ENCODE measurements at regions of chr19 and their contacts with region 1.

Region 1: DNA sequence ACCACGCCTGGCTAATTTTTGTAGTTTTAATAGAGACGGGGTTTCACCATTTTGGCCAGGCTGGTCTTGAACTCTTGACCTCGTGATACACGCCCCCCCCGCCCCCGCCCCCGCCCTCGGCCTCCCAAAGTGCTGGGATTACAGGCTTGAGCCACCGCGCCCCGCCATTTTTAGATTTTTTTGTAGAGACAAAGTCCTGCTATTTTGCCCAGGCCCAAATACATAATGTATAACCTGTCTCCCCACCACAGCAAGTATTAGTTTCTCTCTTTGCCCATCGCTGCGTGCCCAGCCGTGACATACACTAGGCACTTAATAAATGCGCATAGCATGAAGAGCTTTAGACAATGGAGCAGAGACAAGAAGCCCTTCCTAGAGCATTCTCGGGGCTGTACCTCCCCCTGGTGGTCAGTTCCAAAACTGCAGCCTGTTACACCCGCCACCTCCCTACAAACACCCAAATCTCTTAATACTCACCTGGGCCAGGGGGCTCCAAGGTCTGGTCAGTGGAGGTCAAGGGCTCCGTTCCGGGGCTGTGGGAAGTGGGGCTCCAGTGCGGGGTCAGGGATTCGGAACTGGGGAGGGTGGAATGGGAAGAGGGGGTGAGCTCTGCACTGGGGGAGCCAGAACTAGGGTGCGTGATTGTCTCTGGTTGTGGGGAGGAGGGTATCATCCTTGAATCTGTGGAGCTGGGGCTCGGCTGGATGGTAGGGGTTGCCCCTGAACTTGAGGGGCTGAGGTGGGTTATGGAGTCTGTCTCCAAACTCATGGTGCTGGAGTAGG is 22.5 kb downstream of the IQCN start:
- DNase-seq: peak; percentile 65 to 87 (median 77)
- ATAC-seq: peak; percentile 90
- H3K4me3 ChIP-seq: no peak overlapping the region
- H3K4me3 Mint-ChIP-seq: no peak overlapping the region
- H3K27ac ChIP-seq: no peak overlapping the region
- H3K27ac Mint-ChIP-seq: peak overlapping the region in 2 of 9 donors; percentile 2 to 62
- H3K4me1 ChIP-seq: no peaks in the 10 kb centered on the region
- H3K4me1 Mint-ChIP-seq: peaks cover 0 to 7% (median 5%) of the 10 kb centered on the region in 7 donors
- H3K27me3 ChIP-seq: no peaks in the 10 kb centered on the region
- H3K27me3 Mint-ChIP-seq: peaks cover 22 to 36% (median 34%) of the 10 kb centered on the region in 5 donors

Region 2: DNA sequence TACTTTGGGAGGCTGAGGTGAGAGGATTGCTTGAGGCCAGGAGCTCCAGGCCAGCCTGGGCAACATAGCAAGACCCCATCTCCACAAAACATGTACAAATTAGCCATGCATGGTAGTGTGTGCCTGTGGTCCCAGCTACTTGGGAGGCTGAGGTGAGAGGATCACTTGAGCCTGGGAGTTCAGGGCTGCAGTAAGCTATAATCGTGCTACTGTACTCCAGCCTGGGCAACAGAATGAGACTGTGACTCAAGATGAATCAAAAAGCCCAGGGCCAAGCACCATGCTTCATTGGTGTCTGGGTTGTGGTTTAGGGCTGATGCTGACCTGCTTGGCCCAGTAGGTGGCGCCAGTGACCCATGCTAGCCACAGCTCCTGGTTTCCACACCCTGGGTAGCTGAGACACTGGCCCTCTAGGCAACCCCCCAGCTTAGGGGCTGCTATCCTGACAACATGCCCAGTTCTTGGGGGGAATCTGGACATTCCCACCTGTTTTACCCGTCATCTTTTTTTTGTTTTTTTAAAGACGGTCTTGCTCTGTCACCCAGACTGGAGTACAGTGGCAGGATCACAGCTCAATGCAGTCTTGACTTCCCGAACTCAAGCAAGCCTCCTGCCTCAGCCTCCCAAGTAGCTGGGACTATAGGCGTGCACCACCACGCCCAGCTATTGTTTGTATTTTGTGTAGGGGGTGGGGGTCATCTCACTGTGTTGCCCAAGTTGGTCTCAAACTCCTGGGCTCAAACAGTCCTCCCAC is 313.5 kb before region 1 on chr19:
- CTCF ChIA-PET with region 1: interaction called, 6 read pairs
- POLR2A ChIA-PET with region 1: no interaction called
- intact Hi-C with region 1: loop called in 1 of 2 experiments (anchors 1 kb)
- DNase-seq: peak; percentile 67 to 85 (median 78)
- ATAC-seq: peak; percentile 98
- H3K4me3 ChIP-seq: no peak overlapping the region
- H3K4me3 Mint-ChIP-seq: no peak overlapping the region
- H3K27ac ChIP-seq: no peak overlapping the region
- H3K27ac Mint-ChIP-seq: no peak overlapping the region
- H3K4me1 ChIP-seq: peaks cover 5 to 8% of the 10 kb centered on the region in 2 donors
- H3K4me1 Mint-ChIP-seq: peaks cover 5 to 7% (median 6%) of the 10 kb centered on the region in 7 donors
- H3K27me3 ChIP-seq: no peaks in the 10 kb centered on the region
- H3K27me3 Mint-ChIP-seq: no peaks in the 10 kb centered on the region

Region 3: DNA sequence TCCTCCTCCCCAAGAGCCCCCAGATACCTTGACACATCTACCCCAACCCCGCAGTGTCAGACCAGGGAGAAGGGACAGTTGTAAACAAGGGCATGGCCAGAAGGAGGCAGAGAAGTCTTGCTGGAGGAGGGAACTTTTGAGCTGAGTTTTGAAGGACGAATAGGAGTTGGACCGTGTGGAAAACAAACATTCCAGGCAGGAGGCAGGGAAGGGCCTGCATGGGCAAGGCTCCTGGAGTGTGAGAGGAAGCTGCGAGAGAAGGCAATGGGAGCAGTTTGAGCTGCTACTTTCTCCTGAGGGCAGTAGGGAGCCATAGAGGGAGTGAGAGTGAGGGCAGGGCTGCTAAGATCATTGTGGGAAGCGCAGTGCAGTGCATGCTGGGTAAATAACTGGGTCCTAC is 188.3 kb before region 1 on chr19:
- CTCF ChIA-PET with region 1: interaction called, 5 read pairs
- POLR2A ChIA-PET with region 1: no interaction called
- intact Hi-C with region 1: loop called in 1 of 2 experiments (anchors 1 kb)
- DNase-seq: peak in 5 of 9 donors; percentile 31 to 45 (median 33)
- ATAC-seq: no peak
- H3K4me3 ChIP-seq: no peak overlapping the region
- H3K4me3 Mint-ChIP-seq: no peak overlapping the region
- H3K27ac ChIP-seq: no peak overlapping the region
- H3K27ac Mint-ChIP-seq: peak overlapping the region in 4 of 9 donors; percentile 28 to 76 (median 55)
- H3K4me1 ChIP-seq: peaks cover 4% of the 10 kb centered on the region in 2 donors
- H3K4me1 Mint-ChIP-seq: peaks cover 0 to 6% (median 4%) of the 10 kb centered on the region in 7 donors
- H3K27me3 ChIP-seq: no peaks in the 10 kb centered on the region
- H3K27me3 Mint-ChIP-seq: no peaks in the 10 kb centered on the region

Region 4: DNA sequence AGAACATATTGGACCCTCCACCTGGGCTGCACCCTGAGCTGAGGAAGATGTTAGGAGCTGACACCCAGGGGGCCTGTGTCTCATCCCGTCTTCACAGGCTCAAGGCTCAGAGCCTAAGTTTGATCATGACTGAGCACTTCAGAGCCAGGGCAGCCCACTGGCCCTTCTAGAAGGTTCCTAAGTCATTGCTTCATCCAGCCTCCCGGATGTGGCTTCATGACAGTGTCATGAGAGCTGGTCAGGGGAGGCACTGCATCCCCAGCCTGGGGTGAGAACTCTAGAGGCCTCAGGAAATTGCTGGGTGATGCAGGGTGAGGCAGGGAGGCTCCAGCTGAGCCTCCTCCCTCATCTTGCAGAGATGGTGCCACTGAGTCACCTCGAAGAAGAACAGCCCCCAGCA is 123.7 kb before region 1 on chr19:
- CTCF ChIA-PET with region 1: no interaction called
- POLR2A ChIA-PET with region 1: no interaction called
- intact Hi-C with region 1: no loop called
- DNase-seq: no peak
- ATAC-seq: peak; percentile 87
- H3K4me3 ChIP-seq: no peak overlapping the region
- H3K4me3 Mint-ChIP-seq: no peak overlapping the region
- H3K27ac ChIP-seq: no peak overlapping the region
- H3K27ac Mint-ChIP-seq: peak overlapping the region in 2 of 9 donors; percentile 14 to 79
- H3K4me1 ChIP-seq: peaks cover 0 to 7% of the 10 kb centered on the region in 2 donors
- H3K4me1 Mint-ChIP-seq: peaks cover 0 to 13% (median 0%) of the 10 kb centered on the region in 7 donors
- H3K27me3 ChIP-seq: no peaks in the 10 kb centered on the region
- H3K27me3 Mint-ChIP-seq: no peaks in the 10 kb centered on the region

Region 5: DNA sequence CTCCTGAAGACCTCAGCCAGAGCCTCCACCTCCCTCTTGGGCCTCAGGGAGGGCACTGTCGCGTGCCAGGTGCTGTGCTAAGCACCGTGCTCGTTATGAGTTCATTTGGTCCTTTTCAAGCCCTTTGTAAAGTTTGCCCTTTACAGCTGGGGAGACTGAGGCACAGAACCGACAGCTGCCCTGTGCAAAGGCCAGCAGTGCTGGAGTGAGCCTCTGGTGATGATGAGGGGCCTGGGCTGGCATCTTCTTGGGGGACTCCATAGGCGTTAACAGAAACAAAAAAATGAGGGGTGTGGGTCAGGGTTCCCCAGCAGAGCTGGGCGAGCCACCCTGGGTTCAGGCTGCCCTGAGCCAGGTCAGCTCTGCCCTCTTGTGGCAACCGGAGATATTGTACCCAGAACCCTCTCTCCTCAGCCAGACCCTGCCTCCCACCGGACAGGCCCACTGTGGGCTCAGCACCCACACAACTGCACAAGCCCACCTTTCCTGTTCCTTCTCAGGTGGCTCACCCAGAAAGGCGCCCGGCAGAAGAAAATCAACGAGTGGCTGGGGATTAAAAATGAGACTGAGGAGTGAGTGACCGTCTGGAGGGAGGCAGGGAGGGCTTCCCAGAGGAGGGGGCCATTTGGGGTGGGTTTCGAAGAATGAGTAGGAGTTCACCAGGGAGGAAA is 83.7 kb before region 1 on chr19:
- CTCF ChIA-PET with region 1: interaction called, 10 read pairs
- POLR2A ChIA-PET with region 1: no interaction called
- intact Hi-C with region 1: no loop called
- DNase-seq: peak in 7 of 9 donors; percentile 32 to 70 (median 59)
- ATAC-seq: peak; percentile 71
- H3K4me3 ChIP-seq: no peak overlapping the region
- H3K4me3 Mint-ChIP-seq: no peak overlapping the region
- H3K27ac ChIP-seq: no peak overlapping the region
- H3K27ac Mint-ChIP-seq: peak overlapping the region in 2 of 9 donors; percentile 5 to 65
- H3K4me1 ChIP-seq: peaks cover 0 to under 1% of the 10 kb centered on the region in 2 donors
- H3K4me1 Mint-ChIP-seq: peaks cover 0 to 14% (median 4%) of the 10 kb centered on the region in 7 donors
- H3K27me3 ChIP-seq: no peaks in the 10 kb centered on the region
- H3K27me3 Mint-ChIP-seq: no peaks in the 10 kb centered on the region

Region 6: GRCh38 chr19:18328340-18329034 is 76.7 kb after region 1 on chr19:
- CTCF ChIA-PET with region 1: interaction called, 13 read pairs
- POLR2A ChIA-PET with region 1: no interaction called
- intact Hi-C with region 1: loop called (anchors 1 kb)
- DNase-seq: peak; percentile 55 to 92 (median 90)
- ATAC-seq: peak; percentile 99
- H3K4me3 ChIP-seq: peak overlapping the region; percentile 52
- H3K4me3 Mint-ChIP-seq: peak overlapping the region; percentile 62 to 87 (median 78)
- H3K27ac ChIP-seq: peak overlapping the region; percentile 45
- H3K27ac Mint-ChIP-seq: peak overlapping the region in 8 of 9 donors; percentile 38 to 75 (median 72)
- H3K4me1 ChIP-seq: peaks cover 12% of the 10 kb centered on the region in 2 donors
- H3K4me1 Mint-ChIP-seq: peaks cover 13 to 23% (median 20%) of the 10 kb centered on the region in 7 donors
- H3K27me3 ChIP-seq: no peaks in the 10 kb centered on the region
- H3K27me3 Mint-ChIP-seq: no peaks in the 10 kb centered on the region

Region 7: DNA sequence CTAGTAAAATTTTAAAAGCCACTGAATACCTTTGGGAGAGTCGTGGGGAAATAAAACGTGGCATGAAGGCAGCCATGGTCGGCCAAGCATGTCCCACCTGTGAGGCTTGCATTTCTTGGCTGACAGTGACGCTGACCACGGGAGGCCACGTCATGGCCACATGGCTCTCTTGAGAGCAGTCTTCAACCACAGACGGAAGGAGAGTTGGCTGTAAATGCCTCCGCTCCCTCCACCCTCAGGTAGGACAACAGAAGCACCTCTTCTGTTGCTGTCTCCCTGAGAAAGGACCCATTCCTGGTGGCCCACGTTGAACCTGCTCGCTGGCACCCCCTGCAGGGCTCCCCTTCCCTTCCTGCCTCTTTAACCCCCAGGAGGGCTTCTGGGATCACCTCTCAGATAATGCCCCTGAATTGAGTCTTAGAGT is 156.3 kb after region 1 on chr19:
- CTCF ChIA-PET with region 1: interaction called, 7 read pairs
- POLR2A ChIA-PET with region 1: no interaction called
- intact Hi-C with region 1: loop called in 1 of 2 experiments (anchors 1 kb)
- DNase-seq: no peak
- ATAC-seq: peak; percentile 40
- H3K4me3 ChIP-seq: no peak overlapping the region
- H3K4me3 Mint-ChIP-seq: no peak overlapping the region
- H3K27ac ChIP-seq: no peak overlapping the region
- H3K27ac Mint-ChIP-seq: no peak overlapping the region
- H3K4me1 ChIP-seq: no peaks in the 10 kb centered on the region
- H3K4me1 Mint-ChIP-seq: peaks cover 0 to 7% (median 0%) of the 10 kb centered on the region in 7 donors
- H3K27me3 ChIP-seq: no peaks in the 10 kb centered on the region
- H3K27me3 Mint-ChIP-seq: peaks cover 0 to 9% (median 4%) of the 10 kb centered on the region in 5 donors

Measured in naive thymus-derived CD4-positive, alpha-beta T cell (primary cell).